Left cardiac atrium (tissue), 4 donors: ENCODE measurements at regions of chr15 and their contacts with region 1.

Region 1: DNA sequence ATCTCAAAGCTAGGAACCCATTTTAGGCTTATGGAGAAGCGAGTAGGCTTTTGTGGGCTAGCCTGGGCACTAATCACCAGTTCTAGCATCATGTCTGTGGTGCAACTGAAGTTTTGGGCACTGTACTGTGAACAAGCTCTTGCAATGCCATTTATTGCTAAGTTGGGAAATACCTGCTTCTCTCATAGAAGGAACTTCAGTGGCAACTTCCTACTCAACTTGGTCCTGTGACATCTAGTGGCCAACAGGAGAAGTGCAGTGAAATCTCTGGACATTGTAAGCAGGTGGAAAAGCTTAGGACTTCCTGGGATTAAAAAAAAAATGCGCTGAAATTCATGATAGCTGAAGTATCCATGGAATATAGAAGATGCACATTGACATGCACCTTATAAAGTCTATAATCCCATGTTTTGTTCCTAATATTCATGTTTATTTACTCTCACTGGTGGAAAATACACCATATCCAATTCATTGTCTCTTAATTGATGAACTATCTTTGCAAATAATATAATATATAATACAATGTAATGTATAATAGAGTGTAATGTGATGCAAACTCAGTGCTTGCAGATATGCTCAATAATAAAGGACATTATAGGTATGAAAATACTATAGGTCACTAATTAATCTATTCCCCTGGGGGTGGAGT is 6.5 kb upstream of the ALDH1A3 start:
- DNase-seq: peak; percentile 44
- ATAC-seq: peak; percentile 70 to 86

Region 2: DNA sequence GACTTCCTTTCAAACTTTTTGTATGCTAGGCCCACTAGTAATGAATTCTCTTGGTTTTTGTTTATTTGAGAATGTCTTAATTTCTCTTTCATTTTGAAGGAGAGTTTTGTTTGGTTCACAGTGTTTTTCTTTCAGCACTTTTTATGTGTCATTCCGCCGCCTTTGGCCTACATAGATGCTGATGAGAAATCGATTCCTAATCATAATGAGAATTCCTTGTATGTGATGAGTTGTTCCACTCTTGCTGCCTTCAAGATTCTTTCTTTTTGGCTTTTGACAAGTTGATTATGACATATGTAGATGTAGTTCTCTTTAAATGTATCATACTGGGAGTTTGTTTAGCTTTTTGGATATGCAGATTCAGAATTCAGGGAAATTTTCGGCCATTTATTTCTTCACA is 379.9 kb before region 1 on chr15:
- intact Hi-C with region 1: no loop called
- DNase-seq: no peak
- ATAC-seq: no peak

Region 3: GRCh38 chr15:100627789-100628395 is 245.3 kb before region 1 on chr15:
- intact Hi-C with region 1: loop called (anchors 2 to 5 kb)
- DNase-seq: peak; percentile 39
- ATAC-seq: peak; percentile 68 to 88

Region 4: DNA sequence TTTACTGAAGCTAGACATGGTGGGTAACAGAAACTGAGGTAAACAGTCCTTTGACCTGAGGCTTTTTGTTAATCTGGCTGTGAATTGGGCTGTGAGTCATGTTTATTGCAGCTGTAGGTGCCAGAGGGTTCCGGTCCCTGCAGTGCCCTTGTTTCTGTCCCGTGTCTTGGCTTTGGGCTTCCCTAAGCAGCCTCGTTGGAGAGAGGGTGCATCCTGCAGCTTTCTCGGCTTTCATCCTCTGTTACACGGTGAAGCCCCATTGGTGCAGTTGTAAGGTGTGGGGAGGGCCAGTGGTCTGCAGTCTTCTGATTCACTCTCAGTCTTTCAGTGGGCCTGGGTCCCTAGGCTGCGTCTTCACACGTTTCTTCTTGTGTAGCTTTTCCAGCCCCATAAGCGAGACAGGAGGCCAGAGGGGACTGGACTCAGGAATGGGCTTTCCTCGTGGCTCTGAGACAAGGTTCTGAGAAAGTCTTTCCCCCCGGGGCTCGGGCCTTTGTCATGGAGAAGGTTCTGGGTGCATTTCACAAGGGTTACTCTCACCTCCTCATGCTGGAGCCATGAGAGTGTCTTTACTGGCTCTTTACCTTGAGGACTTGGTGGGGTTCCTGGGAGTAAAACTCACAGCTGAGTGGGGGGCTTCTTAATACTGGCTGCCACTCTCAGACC is 237.6 kb before region 1 on chr15:
- intact Hi-C with region 1: loop called in 1 of 2 experiments (anchors 5 kb)
- DNase-seq: no peak
- ATAC-seq: no peak

Region 5: DNA sequence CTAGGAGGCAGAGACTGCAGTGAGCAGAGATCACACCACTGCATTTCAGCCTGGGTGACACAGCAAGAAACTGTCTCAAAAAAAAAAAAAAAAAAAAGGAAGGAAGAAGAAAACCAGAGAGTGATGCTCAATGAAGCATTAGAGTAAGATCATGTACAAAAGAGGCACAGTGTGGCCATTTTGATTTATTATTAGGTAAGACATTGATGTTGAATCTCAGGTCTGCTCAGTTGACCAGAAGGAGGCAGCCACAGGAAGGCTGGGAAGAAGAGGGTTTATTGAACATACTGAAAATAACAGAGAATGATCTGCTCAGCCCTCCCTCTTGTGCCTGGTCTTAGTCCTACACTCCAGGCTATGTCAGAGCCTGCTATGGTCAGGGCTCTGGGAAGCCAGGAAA is 61.6 kb after region 1 on chr15:
- intact Hi-C with region 1: loop called in 1 of 2 experiments (anchors 10 kb)
- DNase-seq: no peak
- ATAC-seq: no peak

Region 6: DNA sequence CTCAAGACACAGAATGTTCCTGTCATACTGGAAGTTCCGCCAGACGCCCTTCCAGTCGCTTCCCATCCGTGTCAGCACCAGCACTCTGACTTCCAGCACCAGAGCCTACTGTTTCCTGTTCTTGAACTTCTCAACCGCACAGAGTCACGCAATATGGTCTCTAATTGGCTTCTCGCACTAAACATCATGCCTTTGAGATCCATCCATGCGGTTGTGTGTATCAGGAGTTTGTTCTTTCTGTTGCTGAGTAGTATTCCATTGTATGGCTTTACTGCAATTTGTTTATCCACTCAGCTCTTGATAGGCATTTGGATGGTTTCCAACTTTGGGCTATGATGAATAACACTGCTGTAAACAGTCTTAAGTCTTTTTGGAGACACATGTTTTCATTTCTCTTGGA is 158.1 kb after region 1 on chr15:
- intact Hi-C with region 1: no loop called
- DNase-seq: no peak
- ATAC-seq: peak in 1 of 2 donors; percentile 16

Region 7: GRCh38 chr15:101810876-101811275 is 937.7 kb after region 1 on chr15:
- intact Hi-C with region 1: no loop called
- DNase-seq: no peak
- ATAC-seq: no peak